IMR-90 (cell line): ENCODE measurements at regions of chr6 and their contacts with region 1.

Region 1: DNA sequence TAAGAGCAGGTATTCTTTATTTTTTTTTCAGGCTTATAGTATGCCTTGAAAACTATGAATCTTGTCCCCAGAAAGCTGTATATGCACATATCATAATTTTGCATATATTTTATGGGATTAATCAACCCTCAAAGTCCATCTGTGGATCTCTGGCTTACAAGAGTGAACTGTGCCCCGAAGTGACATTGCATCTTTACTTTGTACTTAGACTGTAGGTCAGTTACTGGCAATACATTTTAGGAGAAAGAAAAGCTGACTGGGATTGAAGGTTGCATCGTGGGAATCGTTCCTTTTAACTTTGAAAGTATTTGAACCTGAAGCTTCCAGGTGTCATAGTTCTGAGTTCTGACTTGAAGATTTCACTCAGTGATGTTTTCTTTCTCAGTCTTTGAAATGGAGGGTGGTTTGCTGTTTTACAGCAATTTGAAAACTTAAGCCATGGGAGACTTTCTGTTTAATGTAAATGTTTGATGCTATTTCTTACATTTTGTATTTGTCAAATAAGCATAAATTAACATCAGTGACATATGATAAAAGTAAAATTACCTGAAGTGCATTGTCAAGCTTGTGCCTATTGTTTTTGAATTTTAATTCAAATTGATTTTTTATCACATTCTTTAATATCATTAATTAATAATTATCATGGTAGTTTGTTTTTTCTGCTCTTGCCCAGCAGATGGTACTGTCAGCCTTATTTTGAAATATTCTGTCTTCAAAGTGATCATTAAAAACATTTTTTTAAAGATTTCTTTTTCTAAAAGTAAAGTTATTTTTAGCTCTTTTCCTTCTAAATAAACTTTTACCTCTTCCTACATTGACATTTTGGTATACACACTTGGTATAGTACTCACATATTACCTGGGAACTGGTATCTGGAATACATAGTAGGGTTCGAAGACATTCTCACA is 29.0 kb downstream of the L3MBTL3 start:
- DNase-seq: peak; percentile 7
- ATAC-seq: peak; percentile 16; the same call in 1 of the 2 replicates
- H3K4me3 ChIP-seq: no peak overlapping the region
- H3K27ac ChIP-seq: no peak overlapping the region
- H3K4me1 ChIP-seq: peaks cover 9% of the 10 kb centered on the region
- H3K27me3 ChIP-seq: no peaks in the 10 kb centered on the region
- CTCF ChIP-seq: peak; percentile 50
- POLR2A ChIP-seq: no peak
- RAD21 ChIP-seq: peak; percentile 43; the same call in 1 of the 2 replicates

Region 2: GRCh38 chr6:130129762-130130246 is 82.5 kb after region 1 on chr6:
- CTCF ChIA-PET with region 1: no interaction called
- POLR2A ChIA-PET with region 1: no interaction called
- dilution Hi-C with region 1: no loop called
- in situ Hi-C with region 1: no loop called
- intact Hi-C with region 1: loop called (anchors 5 kb)
- DNase-seq: peak; percentile 80
- ATAC-seq: peak; percentile 75
- H3K4me3 ChIP-seq: no peak overlapping the region
- H3K27ac ChIP-seq: no peak overlapping the region
- H3K4me1 ChIP-seq: peaks cover 3% of the 10 kb centered on the region; the same call in 1 of the 2 replicates
- H3K27me3 ChIP-seq: no peaks in the 10 kb centered on the region
- CTCF ChIP-seq: no peak
- POLR2A ChIP-seq: no peak
- RAD21 ChIP-seq: no peak

Region 3: GRCh38 chr6:130282234-130282995 is 235.1 kb after region 1 on chr6:
- CTCF ChIA-PET with region 1: no interaction called
- POLR2A ChIA-PET with region 1: no interaction called
- dilution Hi-C with region 1: no loop called
- in situ Hi-C with region 1: no loop called
- intact Hi-C with region 1: loop called (anchors 2 kb)
- DNase-seq: peak; percentile 45
- ATAC-seq: peak; percentile 85
- H3K4me3 ChIP-seq: no peak overlapping the region
- H3K27ac ChIP-seq: no peak overlapping the region
- H3K4me1 ChIP-seq: no peaks in the 10 kb centered on the region
- H3K27me3 ChIP-seq: peaks cover 2% of the 10 kb centered on the region; the same call in 1 of the 2 replicates
- CTCF ChIP-seq: peak; percentile 46
- POLR2A ChIP-seq: no peak
- RAD21 ChIP-seq: peak; percentile 46

Region 4: DNA sequence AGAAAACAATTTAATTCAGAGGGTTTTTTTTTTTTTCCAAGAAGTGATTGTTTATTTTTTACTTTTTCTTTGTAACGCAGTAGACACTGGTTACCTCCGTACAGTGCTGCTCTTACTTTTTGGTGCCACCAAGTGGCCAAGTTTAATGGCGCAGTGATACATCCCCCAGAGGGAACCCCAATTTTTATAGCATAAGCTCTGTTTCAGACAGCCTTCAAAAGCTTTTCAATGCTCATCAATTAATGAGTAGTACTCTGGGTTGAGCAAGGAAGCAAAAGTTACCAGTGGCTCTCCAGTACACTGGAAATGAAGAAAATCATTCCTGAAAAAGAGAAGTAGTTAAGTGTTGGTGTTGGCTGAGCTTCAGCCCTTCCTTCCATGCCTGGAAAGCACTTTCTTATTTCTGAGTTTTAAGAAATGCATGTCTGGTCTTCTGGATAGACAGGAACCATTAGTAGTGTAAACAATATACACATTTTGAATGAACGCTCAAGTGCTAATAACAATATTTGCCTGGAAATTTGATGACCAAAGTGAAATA is 650.7 kb after region 1 on chr6:
- CTCF ChIA-PET with region 1: no interaction called
- POLR2A ChIA-PET with region 1: no interaction called
- dilution Hi-C with region 1: no loop called
- in situ Hi-C with region 1: no loop called
- intact Hi-C with region 1: loop called (anchors 1 kb)
- DNase-seq: peak; percentile 66
- ATAC-seq: peak; percentile 96
- H3K4me3 ChIP-seq: no peak overlapping the region
- H3K27ac ChIP-seq: no peak overlapping the region
- H3K4me1 ChIP-seq: no peaks in the 10 kb centered on the region; the same call in 1 of the 2 replicates
- H3K27me3 ChIP-seq: peaks cover 4% of the 10 kb centered on the region
- CTCF ChIP-seq: peak; percentile 89
- POLR2A ChIP-seq: 0 out of 2 replicates have a peak, but pooled peaks have one; percentile 45
- RAD21 ChIP-seq: peak; percentile 93

Region 5: GRCh38 chr6:130872250-130873095 is 825.1 kb after region 1 on chr6:
- CTCF ChIA-PET with region 1: no interaction called
- POLR2A ChIA-PET with region 1: no interaction called
- dilution Hi-C with region 1: no loop called
- in situ Hi-C with region 1: no loop called
- intact Hi-C with region 1: loop called (anchors 5 kb)
- DNase-seq: peak; percentile 44
- ATAC-seq: peak; percentile 67
- H3K4me3 ChIP-seq: no peak overlapping the region
- H3K27ac ChIP-seq: no peak overlapping the region
- H3K4me1 ChIP-seq: no peaks in the 10 kb centered on the region
- H3K27me3 ChIP-seq: no peaks in the 10 kb centered on the region
- CTCF ChIP-seq: peak; percentile 76
- POLR2A ChIP-seq: no peak
- RAD21 ChIP-seq: peak; percentile 64

Region 6: DNA sequence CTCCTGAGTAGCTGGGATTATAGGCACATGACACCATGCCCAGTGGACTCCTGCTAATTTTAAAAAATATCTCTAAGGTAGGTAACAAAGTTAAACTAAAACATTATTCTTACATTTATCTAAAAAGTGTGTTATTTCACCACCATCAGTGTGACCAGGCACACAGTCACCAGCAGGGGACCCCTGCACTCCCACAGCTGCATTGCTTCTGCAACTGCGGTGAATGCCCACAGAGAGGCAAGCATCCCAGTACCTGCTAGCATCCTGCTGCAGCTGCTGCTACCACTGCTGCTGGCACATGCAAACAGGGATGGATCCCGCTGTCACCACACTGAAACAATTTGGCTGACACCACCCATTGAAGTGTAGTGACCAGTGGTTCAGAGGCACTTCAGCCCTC is 1037.6 kb after region 1 on chr6:
- CTCF ChIA-PET with region 1: no interaction called
- POLR2A ChIA-PET with region 1: no interaction called
- dilution Hi-C with region 1: no loop called
- in situ Hi-C with region 1: no loop called
- intact Hi-C with region 1: no loop called
- DNase-seq: no peak
- ATAC-seq: no peak
- H3K4me3 ChIP-seq: no peak overlapping the region
- H3K27ac ChIP-seq: no peak overlapping the region
- H3K4me1 ChIP-seq: no peaks in the 10 kb centered on the region
- H3K27me3 ChIP-seq: no peaks in the 10 kb centered on the region
- CTCF ChIP-seq: no peak
- POLR2A ChIP-seq: no peak
- RAD21 ChIP-seq: no peak